Naive thymus-derived CD4-positive, alpha-beta T cell (primary cell): ENCODE measurements at regions of chr2 and their contacts with region 1.

Region 1: DNA sequence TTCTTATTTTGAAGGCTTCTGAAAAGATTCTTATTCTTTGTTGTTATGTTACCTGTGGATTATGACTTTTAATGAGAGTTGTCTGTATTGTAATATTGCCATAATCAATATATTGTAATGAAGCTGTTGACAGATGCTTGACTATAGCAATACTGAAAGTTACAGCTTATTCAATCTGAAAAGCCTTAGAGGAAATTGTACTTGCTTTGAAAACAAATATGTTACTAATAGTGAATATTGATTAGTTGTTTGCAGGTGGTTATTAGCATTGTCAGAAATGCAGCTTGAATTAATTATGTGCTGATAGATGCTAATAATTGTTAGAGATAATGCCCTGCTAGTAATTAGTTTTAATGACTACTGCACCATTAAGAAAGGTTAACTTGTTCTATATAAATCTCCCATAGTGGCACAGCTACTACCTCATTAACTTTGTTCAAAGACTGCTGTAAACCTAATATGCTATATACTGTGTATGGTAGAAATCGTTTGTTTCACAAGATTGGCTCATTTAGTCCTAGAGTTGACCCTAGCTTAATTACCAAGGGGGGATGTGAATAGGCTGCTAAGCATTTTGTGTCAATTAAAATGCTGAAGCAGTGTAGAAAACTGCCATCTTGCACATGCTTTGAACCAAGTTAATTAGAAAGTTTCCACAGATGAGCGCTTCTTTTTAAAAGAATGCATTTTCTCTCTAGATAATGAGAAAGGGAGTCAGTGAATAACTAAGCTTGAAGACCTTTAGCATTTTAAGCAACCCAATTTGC is 30.5 kb downstream of the SLC39A10 start:
- DNase-seq: no peak
- ATAC-seq: no peak
- H3K4me3 ChIP-seq: no peak overlapping the region
- H3K4me3 Mint-ChIP-seq: no peak overlapping the region
- H3K27ac ChIP-seq: no peak overlapping the region
- H3K27ac Mint-ChIP-seq: no peak overlapping the region
- H3K4me1 ChIP-seq: no peaks in the 10 kb centered on the region
- H3K4me1 Mint-ChIP-seq: peaks cover 21 to 73% (median 57%) of the 10 kb centered on the region in 7 donors
- H3K27me3 ChIP-seq: no peaks in the 10 kb centered on the region
- H3K27me3 Mint-ChIP-seq: no peaks in the 10 kb centered on the region

Region 2: GRCh38 chr2:195706161-195706900 is 18.8 kb after region 1 on chr2:
- CTCF ChIA-PET with region 1: no interaction called
- POLR2A ChIA-PET with region 1: no interaction called
- intact Hi-C with region 1: loop called in 1 of 2 experiments (anchors 2 kb)
- DNase-seq: no peak
- ATAC-seq: no peak
- H3K4me3 ChIP-seq: no peak overlapping the region
- H3K4me3 Mint-ChIP-seq: no peak overlapping the region
- H3K27ac ChIP-seq: no peak overlapping the region
- H3K27ac Mint-ChIP-seq: no peak overlapping the region
- H3K4me1 ChIP-seq: no peaks in the 10 kb centered on the region
- H3K4me1 Mint-ChIP-seq: peaks cover 0 to 26% (median 10%) of the 10 kb centered on the region in 7 donors
- H3K27me3 ChIP-seq: no peaks in the 10 kb centered on the region
- H3K27me3 Mint-ChIP-seq: no peaks in the 10 kb centered on the region